Heart left ventricle (tissue), 16 donors: ENCODE measurements at regions of chr15 and their contacts with region 1.

Region 1: DNA sequence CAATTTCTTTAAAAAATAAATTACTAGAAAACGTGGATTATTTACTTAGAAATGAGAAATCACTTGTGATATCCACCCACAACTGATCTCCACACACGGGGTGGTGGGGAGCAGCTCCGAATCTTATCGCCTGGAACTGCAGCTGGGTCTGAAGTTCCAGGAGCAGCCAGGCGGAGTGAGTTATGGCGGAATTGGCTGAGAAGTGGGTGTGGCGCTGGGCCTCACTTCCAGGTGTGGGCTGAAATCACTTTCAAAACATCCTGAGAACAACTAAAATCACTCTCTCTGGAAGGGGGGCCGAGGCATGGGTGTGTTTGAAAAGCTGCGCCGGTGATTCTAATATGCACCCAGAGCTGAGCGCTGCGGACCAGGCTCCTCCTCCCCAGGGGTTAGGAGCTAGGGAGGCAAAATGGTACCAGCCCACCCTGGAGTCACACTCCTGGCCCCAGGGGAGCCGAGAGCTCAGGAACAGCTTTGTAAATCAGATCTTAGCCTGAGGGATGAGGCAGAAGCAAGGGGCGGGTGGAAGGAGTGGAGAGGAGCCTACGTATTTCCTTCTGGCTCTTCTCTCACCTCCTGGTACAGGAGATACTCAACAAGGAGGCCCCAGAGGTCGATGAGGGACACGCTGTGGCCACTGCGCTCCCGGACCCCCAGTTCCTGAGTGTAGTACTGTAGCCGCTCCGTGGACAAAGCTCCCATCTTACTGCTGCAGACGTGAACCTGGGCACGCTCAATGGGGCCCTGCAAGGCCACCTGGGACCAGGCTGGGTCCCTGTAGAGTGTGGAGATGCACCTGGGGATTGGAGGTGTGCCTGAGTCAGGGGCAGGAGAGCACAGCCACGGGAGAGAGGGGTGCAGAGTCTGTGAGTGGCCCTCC is 9.6 kb downstream of the PLA2G4F start:
- DNase-seq: no peak
- ATAC-seq: no peak
- H3K4me3 ChIP-seq: no peak overlapping the region
- H3K27ac ChIP-seq: no peak overlapping the region
- H3K4me1 ChIP-seq: peaks cover 0 to 11% (median 3%) of the 10 kb centered on the region in 12 donors
- H3K27me3 ChIP-seq: no peaks in the 10 kb centered on the region
- CTCF ChIP-seq: no peak
- POLR2A ChIP-seq: no peak

Region 2: GRCh38 chr15:41904541-41905005 is 242.2 kb before region 1 on chr15:
- intact Hi-C with region 1: loop called in 1 of 10 experiments (anchors 5 kb)
- DNase-seq: peak in 4 of 5 donors; percentile 63 to 67 (median 65)
- ATAC-seq: peak; percentile 48 to 75 (median 64)
- H3K4me3 ChIP-seq: no peak overlapping the region
- H3K27ac ChIP-seq: peak overlapping the region in 9 of 12 donors; percentile 20 to 67 (median 42)
- H3K4me1 ChIP-seq: peaks cover 0 to 40% (median 21%) of the 10 kb centered on the region in 12 donors
- H3K27me3 ChIP-seq: no peaks in the 10 kb centered on the region
- CTCF ChIP-seq: peak; percentile 78 to 89 (median 83)
- POLR2A ChIP-seq: no peak